Naive thymus-derived CD4-positive, alpha-beta T cell (primary cell): ENCODE measurements at regions of chr2 and their contacts with region 1.

Region 1: GRCh38 chr2:178414266-178415247 is 36.4 kb downstream of the PRKRA start:
- DNase-seq: peak; percentile 50 to 77 (median 64)
- ATAC-seq: peak; percentile 86
- H3K4me3 ChIP-seq: peak overlapping the region; percentile 53
- H3K4me3 Mint-ChIP-seq: peak overlapping the region; percentile 83 to 98 (median 90)
- H3K27ac ChIP-seq: peak overlapping the region; percentile 72
- H3K27ac Mint-ChIP-seq: peak overlapping the region; percentile 85 to 99 (median 94)
- H3K4me1 ChIP-seq: peaks cover 6 to 7% of the 10 kb centered on the region in 2 donors
- H3K4me1 Mint-ChIP-seq: peaks cover 5 to 58% (median 23%) of the 10 kb centered on the region in 7 donors
- H3K27me3 ChIP-seq: no peaks in the 10 kb centered on the region
- H3K27me3 Mint-ChIP-seq: peaks cover 0 to 3% (median 0%) of the 10 kb centered on the region in 5 donors

Region 2: GRCh38 chr2:177618255-177619253 is 796.0 kb before region 1 on chr2:
- CTCF ChIA-PET with region 1: no interaction called
- POLR2A ChIA-PET with region 1: no interaction called
- intact Hi-C with region 1: loop called (anchors 2 to 5 kb)
- DNase-seq: peak; percentile 86 to 93 (median 91)
- ATAC-seq: peak; percentile 95
- H3K4me3 ChIP-seq: peak overlapping the region; percentile 86
- H3K4me3 Mint-ChIP-seq: peak overlapping the region; percentile 80 to 99 (median 96)
- H3K27ac ChIP-seq: peak overlapping the region; percentile 96
- H3K27ac Mint-ChIP-seq: peak overlapping the region; percentile 98 to 100 (median 99)
- H3K4me1 ChIP-seq: no peaks in the 10 kb centered on the region
- H3K4me1 Mint-ChIP-seq: peaks cover 0 to 15% (median 9%) of the 10 kb centered on the region in 7 donors
- H3K27me3 ChIP-seq: no peaks in the 10 kb centered on the region
- H3K27me3 Mint-ChIP-seq: peaks cover 0 to 35% (median 9%) of the 10 kb centered on the region in 5 donors

Region 3: GRCh38 chr2:178256382-178257042 is 158.0 kb before region 1 on chr2:
- CTCF ChIA-PET with region 1: no interaction called
- POLR2A ChIA-PET with region 1: no interaction called
- intact Hi-C with region 1: no loop called
- DNase-seq: no peak
- ATAC-seq: no peak
- H3K4me3 ChIP-seq: no peak overlapping the region
- H3K4me3 Mint-ChIP-seq: no peak overlapping the region
- H3K27ac ChIP-seq: no peak overlapping the region
- H3K27ac Mint-ChIP-seq: no peak overlapping the region
- H3K4me1 ChIP-seq: no peaks in the 10 kb centered on the region
- H3K4me1 Mint-ChIP-seq: no peaks in the 10 kb centered on the region
- H3K27me3 ChIP-seq: no peaks in the 10 kb centered on the region
- H3K27me3 Mint-ChIP-seq: peaks cover 0 to 7% (median 0%) of the 10 kb centered on the region in 5 donors

Region 4: GRCh38 chr2:178306352-178307073 is 108.0 kb before region 1 on chr2:
- CTCF ChIA-PET with region 1: no interaction called
- POLR2A ChIA-PET with region 1: no interaction called
- intact Hi-C with region 1: loop called (anchors 1 kb)
- DNase-seq: peak in 4 of 9 donors; percentile 2 to 26 (median 3)
- ATAC-seq: peak; percentile 41
- H3K4me3 ChIP-seq: no peak overlapping the region
- H3K4me3 Mint-ChIP-seq: no peak overlapping the region
- H3K27ac ChIP-seq: no peak overlapping the region
- H3K27ac Mint-ChIP-seq: no peak overlapping the region
- H3K4me1 ChIP-seq: no peaks in the 10 kb centered on the region
- H3K4me1 Mint-ChIP-seq: no peaks in the 10 kb centered on the region
- H3K27me3 ChIP-seq: no peaks in the 10 kb centered on the region
- H3K27me3 Mint-ChIP-seq: peaks cover 10 to 34% (median 22%) of the 10 kb centered on the region in 5 donors

Region 5: DNA sequence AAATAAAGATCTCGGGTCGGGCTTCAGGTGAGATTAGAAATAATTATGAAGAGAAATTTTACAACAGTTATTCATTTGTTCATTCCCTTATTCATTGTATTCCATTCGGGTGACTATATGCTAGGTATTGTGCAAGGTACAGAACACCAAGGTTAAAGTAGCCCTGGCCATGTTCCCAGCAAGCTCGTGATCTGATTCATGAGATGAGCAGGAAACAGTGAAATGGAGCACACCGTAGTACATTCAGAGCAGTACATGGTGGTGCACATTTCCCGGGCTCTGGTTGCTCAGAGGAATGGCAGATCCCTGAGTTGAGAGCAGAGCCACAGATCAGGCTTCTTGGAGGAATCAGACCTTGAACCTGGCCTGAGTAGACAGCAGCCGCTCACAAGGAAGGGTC is 51.3 kb before region 1 on chr2:
- CTCF ChIA-PET with region 1: no interaction called
- POLR2A ChIA-PET with region 1: no interaction called
- intact Hi-C with region 1: no loop called
- DNase-seq: no peak
- ATAC-seq: no peak
- H3K4me3 ChIP-seq: no peak overlapping the region
- H3K4me3 Mint-ChIP-seq: no peak overlapping the region
- H3K27ac ChIP-seq: no peak overlapping the region
- H3K27ac Mint-ChIP-seq: no peak overlapping the region
- H3K4me1 ChIP-seq: no peaks in the 10 kb centered on the region
- H3K4me1 Mint-ChIP-seq: no peaks in the 10 kb centered on the region
- H3K27me3 ChIP-seq: no peaks in the 10 kb centered on the region
- H3K27me3 Mint-ChIP-seq: peaks cover 4 to 19% (median 9%) of the 10 kb centered on the region in 5 donors

Region 6: DNA sequence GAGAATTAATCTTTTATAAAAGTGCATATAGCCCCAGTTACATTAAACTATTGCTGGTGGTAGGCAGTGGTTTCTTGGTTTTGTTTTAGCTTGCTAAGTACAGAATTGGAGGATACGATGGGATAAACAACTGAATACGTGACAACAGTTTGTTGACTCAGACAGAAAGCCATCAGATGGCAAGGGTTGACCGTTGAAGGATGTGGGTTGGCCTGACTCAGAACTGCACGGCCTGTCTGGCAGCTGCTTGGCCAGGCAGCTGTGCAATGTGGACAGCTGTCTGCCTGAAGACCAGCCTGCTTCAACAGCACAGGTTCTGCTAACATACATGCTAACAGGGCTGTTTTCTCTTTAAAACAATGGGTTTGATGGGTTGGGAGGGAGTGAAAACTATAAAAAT is 10.2 kb before region 1 on chr2:
- CTCF ChIA-PET with region 1: interaction called, 9 read pairs
- POLR2A ChIA-PET with region 1: interaction called, 3 read pairs
- intact Hi-C with region 1: loop called in 1 of 2 experiments (anchors 1 kb)
- DNase-seq: peak in 1 of 9 donors; percentile 37
- ATAC-seq: no peak
- H3K4me3 ChIP-seq: no peak overlapping the region
- H3K4me3 Mint-ChIP-seq: peak overlapping the region in 1 of 10 donors; percentile 77
- H3K27ac ChIP-seq: no peak overlapping the region
- H3K27ac Mint-ChIP-seq: peak overlapping the region in 1 of 9 donors; percentile 88
- H3K4me1 ChIP-seq: no peaks in the 10 kb centered on the region
- H3K4me1 Mint-ChIP-seq: peaks cover 0 to 26% (median 0%) of the 10 kb centered on the region in 7 donors
- H3K27me3 ChIP-seq: no peaks in the 10 kb centered on the region
- H3K27me3 Mint-ChIP-seq: peaks cover 0 to 7% (median 5%) of the 10 kb centered on the region in 5 donors

Region 7: GRCh38 chr2:178478439-178479274 is 64.1 kb after region 1 on chr2 and contains the start of gene FKBP7:
- CTCF ChIA-PET with region 1: no interaction called
- POLR2A ChIA-PET with region 1: no interaction called
- intact Hi-C with region 1: loop called (anchors 1 kb)
- DNase-seq: peak; percentile 71 to 87 (median 80)
- ATAC-seq: peak; percentile 90
- H3K4me3 ChIP-seq: peak within 1 kb of the TSS; percentile 91
- H3K4me3 Mint-ChIP-seq: peak within 1 kb of the TSS; percentile 94 to 100 (median 99)
- H3K27ac ChIP-seq: peak within 1 kb of the TSS; percentile 80
- H3K27ac Mint-ChIP-seq: peak within 1 kb of the TSS; percentile 91 to 99 (median 98)
- H3K4me1 ChIP-seq: peaks cover 22 to 28% of the 10 kb centered on the region in 2 donors
- H3K4me1 Mint-ChIP-seq: peaks cover 27 to 45% (median 41%) of the 10 kb centered on the region in 7 donors
- H3K27me3 ChIP-seq: no peaks in the 10 kb centered on the region
- H3K27me3 Mint-ChIP-seq: no peaks in the 10 kb centered on the region
- total RNA-seq, gene FKBP7: 0.64 to 2.7 (median 1.9) TPM

Region 8: GRCh38 chr2:180006781-180007579 is 1592.4 kb after region 1 on chr2 and contains the start of gene CWC22:
- CTCF ChIA-PET with region 1: no interaction called
- POLR2A ChIA-PET with region 1: no interaction called
- intact Hi-C with region 1: loop called in 1 of 2 experiments (anchors 5 kb)
- DNase-seq: peak; percentile 73 to 93 (median 89)
- ATAC-seq: peak; percentile 96
- H3K4me3 ChIP-seq: peak within 1 kb of the TSS; percentile 96
- H3K4me3 Mint-ChIP-seq: peak within 1 kb of the TSS; percentile 92 to 100 (median 96)
- H3K27ac ChIP-seq: peak within 1 kb of the TSS; percentile 93
- H3K27ac Mint-ChIP-seq: peak within 1 kb of the TSS; percentile 98 to 100 (median 99)
- H3K4me1 ChIP-seq: peaks cover 8 to 11% of the 10 kb centered on the region in 2 donors
- H3K4me1 Mint-ChIP-seq: peaks cover 19 to 54% (median 49%) of the 10 kb centered on the region in 7 donors
- H3K27me3 ChIP-seq: no peaks in the 10 kb centered on the region
- H3K27me3 Mint-ChIP-seq: peaks cover 0 to 3% (median 0%) of the 10 kb centered on the region in 5 donors
- total RNA-seq, gene CWC22: 14.4 to 32.0 (median 23.5) TPM